ENCODE measurements at regions of chr6 and their contacts with region 1.

Region 1: GRCh38 chr6:43629505-43630300 is 639 bp upstream of the GTPBP2 start:
- DNase-seq: peak; percentile 98
- ATAC-seq: peak; percentile 86
- H3K4me3 ChIP-seq: peak overlapping the region; percentile 64 to 85 (median 76)
- H3K27ac ChIP-seq: peak overlapping the region; percentile 87
- H3K4me1 ChIP-seq: peaks cover 36% of the 10 kb centered on the region
- H3K27me3 ChIP-seq: no peaks in the 10 kb centered on the region; a peak in 1 of 5 replicates
- CTCF ChIP-seq: no peak; the same call in 1 of the 2 replicates
- EP300 ChIP-seq: 0 out of 4 replicates have a peak, but pooled peaks of 1 of the 2 experiments have one; percentile 16
- POLR2A ChIP-seq: peak; percentile 86 to 93
- RAD21 ChIP-seq: 0 out of 2 replicates have a peak, but pooled peaks have one; percentile 15

Region 2: DNA sequence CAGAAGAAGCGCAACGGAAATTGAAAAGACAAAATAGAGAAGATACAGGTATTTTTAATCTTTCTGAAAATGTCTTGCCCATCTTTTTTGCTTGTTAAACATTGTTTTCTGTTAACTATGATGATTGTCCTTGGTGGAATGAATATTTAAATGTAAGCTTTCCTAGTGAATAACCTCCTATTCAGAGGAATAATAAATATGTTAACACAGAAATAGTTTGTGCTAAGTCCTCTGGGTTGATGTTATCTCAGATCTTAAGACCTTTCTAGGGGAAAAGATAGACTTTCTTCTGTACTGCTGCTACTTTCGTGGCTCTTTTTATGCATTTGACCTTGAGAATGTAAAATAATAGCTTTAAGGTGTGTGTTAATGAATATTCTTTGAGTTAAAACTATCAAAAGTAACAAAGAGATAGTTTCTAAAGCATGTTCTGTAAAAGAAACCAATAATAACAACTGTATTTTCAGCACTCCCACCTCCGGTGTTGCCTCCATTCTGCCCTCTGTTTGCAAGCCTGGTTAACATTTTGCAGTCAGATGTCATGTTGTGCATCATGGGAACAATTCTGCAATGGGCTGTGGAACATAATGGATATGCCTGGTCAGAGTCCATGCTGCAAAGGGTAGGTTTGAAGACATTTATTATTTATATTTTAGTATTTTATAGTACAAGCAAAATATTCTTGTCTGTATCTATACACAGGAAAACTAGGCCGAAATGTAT is 977.5 kb before region 1 on chr6:
- CTCF ChIA-PET with region 1: no interaction called
- POLR2A ChIA-PET with region 1: no interaction called
- in situ Hi-C with region 1: no loop called
- intact Hi-C with region 1: no loop called
- DNase-seq: no peak
- ATAC-seq: no peak
- H3K4me3 ChIP-seq: no peak overlapping the region
- H3K27ac ChIP-seq: no peak overlapping the region
- H3K4me1 ChIP-seq: no peaks in the 10 kb centered on the region
- H3K27me3 ChIP-seq: no peaks in the 10 kb centered on the region
- CTCF ChIP-seq: no peak
- EP300 ChIP-seq: no peak
- POLR2A ChIP-seq: no peak
- RAD21 ChIP-seq: no peak

Region 3: GRCh38 chr6:43174263-43175112 is 455.2 kb before region 1 on chr6:
- CTCF ChIA-PET with region 1: no interaction called
- POLR2A ChIA-PET with region 1: interaction called, 3 read pairs
- in situ Hi-C with region 1: no loop called
- intact Hi-C with region 1: loop called (anchors 5 kb)
- DNase-seq: peak; percentile 99
- ATAC-seq: peak; percentile 76
- H3K4me3 ChIP-seq: peak overlapping the region; percentile 3 to 97 (median 95); a peak in 4 of 6 replicates
- H3K27ac ChIP-seq: peak overlapping the region; percentile 57
- H3K4me1 ChIP-seq: peaks cover 37% of the 10 kb centered on the region
- H3K27me3 ChIP-seq: no peaks in the 10 kb centered on the region; a peak in 1 of 5 replicates
- CTCF ChIP-seq: peak; percentile 39
- EP300 ChIP-seq: no peak
- POLR2A ChIP-seq: peak in 1 of 2 experiments; percentile 60; a peak in 1 of 4 replicates
- RAD21 ChIP-seq: peak; percentile 49; the same call in 1 of the 2 replicates

Region 4: DNA sequence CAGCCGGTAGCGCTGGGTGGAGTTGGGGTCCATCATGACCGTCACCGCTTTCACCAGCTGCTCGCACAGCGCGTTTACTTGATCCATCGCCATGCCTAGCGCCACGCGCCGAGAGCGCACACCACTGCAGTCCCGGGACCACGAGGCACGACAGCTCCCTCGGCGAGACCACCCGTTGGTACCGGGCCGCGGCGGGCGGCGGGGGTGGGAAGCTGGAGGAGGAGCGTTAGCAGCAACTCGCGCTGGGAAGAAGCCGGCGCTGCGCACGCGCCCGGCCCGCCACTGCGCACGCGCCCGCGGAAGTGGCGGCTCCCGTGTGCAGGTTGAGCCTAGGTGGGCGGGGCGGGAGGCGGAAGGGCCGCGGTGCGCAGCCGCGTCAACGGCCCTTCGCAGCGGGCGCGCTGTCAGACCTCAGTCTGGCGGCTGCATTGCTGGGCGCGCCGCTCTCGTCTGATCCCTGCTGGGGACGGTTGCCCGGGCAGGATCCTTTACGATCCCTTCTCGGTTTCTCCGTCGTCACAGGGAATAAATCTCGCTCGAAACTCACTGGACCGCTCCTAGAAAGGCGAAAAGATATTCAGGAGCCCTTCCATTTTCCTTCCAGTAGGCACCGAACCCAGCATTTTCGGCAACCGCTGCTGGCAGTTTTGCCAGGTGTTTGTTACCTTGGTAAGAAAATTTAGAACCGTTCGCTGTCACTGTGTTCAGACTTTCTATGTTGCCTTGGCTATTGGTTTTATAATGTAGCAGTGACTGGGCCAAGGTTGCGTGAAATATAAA is 53.7 kb before region 1 on chr6 and contains the starts of genes POLH and XPO5:
- CTCF ChIA-PET with region 1: no interaction called
- POLR2A ChIA-PET with region 1: interaction called, 33 read pairs
- in situ Hi-C with region 1: no loop called
- intact Hi-C with region 1: no loop called
- DNase-seq: peak; percentile 92
- ATAC-seq: peak; percentile 98
- H3K4me3 ChIP-seq: peak within 1 kb of the TSS; percentile 84 to 100 (median 97)
- H3K27ac ChIP-seq: peak within 1 kb of the TSS; percentile 71
- H3K4me1 ChIP-seq: peaks cover 34% of the 10 kb centered on the region
- H3K27me3 ChIP-seq: no peaks in the 10 kb centered on the region; a peak in 1 of 5 replicates
- CTCF ChIP-seq: peak; percentile 38; the same call in 1 of the 2 replicates
- EP300 ChIP-seq: peak in 1 of 2 experiments; percentile 6; a peak in 1 of 4 replicates
- POLR2A ChIP-seq: peak; percentile 98 to 99
- RAD21 ChIP-seq: peak; percentile 7; the same call in 1 of the 2 replicates
- total RNA-seq, gene POLH: 25.0 and 35.5 TPM in 2 replicates
- total RNA-seq, gene XPO5: 68.0 and 71.3 TPM in 2 replicates

Region 5: DNA sequence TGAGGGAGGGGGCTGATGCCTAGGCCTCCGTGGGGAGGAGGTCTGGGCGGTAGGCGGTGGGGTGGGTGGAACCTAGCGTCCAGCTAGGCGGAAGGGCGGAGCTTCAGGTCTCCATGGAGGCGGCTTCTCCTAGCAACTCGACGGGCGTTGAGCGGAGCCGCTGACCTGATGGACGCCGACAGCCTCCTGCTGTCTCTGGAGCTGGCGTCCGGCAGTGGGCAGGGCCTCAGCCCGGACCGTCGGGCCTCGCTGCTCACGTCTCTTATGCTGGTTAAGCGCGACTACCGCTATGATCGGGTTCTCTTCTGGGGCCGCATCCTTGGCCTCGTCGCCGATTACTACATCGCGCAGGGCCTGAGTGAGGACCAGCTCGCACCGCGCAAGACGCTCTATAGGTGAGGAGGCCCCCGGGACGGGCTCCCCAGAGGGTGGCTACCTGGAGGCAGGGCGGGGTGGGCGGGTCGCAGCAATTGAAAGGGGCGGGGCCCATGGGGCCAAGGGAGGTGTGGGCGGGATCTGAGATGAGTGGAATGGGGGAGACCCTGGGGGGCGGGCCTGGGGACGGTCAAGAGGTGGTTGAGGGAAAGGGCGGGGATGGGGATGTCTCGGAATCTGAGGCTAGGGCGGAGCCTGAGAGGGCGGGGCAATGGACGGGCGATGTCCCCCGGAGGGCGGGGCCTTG is 15.4 kb after region 1 on chr6 and contains the start of gene RSPH9:
- CTCF ChIA-PET with region 1: no interaction called
- POLR2A ChIA-PET with region 1: interaction called, 14 read pairs
- in situ Hi-C with region 1: no loop called
- intact Hi-C with region 1: no loop called
- DNase-seq: no peak
- ATAC-seq: peak; percentile 14; the same call in 1 of the 3 replicates
- H3K4me3 ChIP-seq: no peak within 1 kb of the TSS
- H3K27ac ChIP-seq: no peak within 1 kb of the TSS
- H3K4me1 ChIP-seq: no peaks in the 10 kb centered on the region
- H3K27me3 ChIP-seq: peaks cover 0 to 7% of the 10 kb centered on the region in 2 experiments; a peak in 1 of 5 replicates
- CTCF ChIP-seq: no peak
- EP300 ChIP-seq: no peak
- POLR2A ChIP-seq: no peak
- RAD21 ChIP-seq: no peak
- total RNA-seq, gene RSPH9: 0.04 TPM in 1 of 2 replicates, not detected in the other

Region 6: DNA sequence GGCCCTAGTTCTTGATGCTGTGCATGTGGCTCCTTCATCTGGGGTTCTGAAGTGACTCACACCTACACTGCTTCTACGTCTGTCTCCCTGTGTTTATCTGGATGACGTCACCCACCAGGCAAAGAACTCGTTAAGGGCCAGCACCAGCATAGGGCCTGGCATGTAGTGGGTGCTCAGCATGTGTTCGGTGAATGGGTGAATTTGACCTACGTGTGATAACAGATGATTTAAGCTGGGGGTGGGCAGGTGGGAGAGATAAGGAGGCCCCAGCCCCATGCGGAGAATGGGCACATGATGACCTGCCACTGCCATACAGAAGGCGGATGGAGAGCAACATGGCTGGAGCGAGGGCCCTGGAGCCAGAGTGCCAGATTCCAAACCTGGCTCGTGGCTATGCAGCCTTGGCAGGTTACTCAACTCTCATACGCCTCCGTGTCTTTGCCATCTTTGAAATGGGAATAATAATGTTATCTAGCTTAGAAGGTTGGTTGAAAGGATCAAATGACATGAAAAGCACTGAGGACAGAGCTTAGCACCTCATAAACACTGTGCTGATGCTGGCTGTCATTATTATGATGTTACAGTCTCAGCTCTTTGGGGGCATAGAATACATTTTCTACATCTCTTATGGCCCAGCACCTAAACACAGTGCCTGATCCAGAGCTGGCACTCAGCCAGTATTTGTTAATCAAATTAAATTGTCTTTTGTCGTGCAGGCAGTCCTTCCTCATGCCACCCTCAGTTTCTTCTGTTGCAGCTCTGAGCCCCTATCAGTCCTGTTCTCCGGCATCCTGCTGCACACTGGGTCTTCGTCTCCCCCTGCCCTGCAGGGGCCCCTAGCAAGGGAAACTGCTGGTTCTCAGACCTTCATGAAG is 180.0 kb after region 1 on chr6:
- CTCF ChIA-PET with region 1: no interaction called
- POLR2A ChIA-PET with region 1: interaction called, 16 read pairs
- in situ Hi-C with region 1: no loop called
- intact Hi-C with region 1: no loop called
- DNase-seq: peak; percentile 45
- ATAC-seq: no peak
- H3K4me3 ChIP-seq: no peak overlapping the region
- H3K27ac ChIP-seq: no peak overlapping the region
- H3K4me1 ChIP-seq: peaks cover 83% of the 10 kb centered on the region
- H3K27me3 ChIP-seq: no peaks in the 10 kb centered on the region; a peak in 2 of 5 replicates
- CTCF ChIP-seq: no peak
- EP300 ChIP-seq: no peak
- POLR2A ChIP-seq: no peak
- RAD21 ChIP-seq: no peak

Measured in HepG2 (cell line).